ENCODE measurements at regions of chr1 and their contacts with region 1.

Region 1: DNA sequence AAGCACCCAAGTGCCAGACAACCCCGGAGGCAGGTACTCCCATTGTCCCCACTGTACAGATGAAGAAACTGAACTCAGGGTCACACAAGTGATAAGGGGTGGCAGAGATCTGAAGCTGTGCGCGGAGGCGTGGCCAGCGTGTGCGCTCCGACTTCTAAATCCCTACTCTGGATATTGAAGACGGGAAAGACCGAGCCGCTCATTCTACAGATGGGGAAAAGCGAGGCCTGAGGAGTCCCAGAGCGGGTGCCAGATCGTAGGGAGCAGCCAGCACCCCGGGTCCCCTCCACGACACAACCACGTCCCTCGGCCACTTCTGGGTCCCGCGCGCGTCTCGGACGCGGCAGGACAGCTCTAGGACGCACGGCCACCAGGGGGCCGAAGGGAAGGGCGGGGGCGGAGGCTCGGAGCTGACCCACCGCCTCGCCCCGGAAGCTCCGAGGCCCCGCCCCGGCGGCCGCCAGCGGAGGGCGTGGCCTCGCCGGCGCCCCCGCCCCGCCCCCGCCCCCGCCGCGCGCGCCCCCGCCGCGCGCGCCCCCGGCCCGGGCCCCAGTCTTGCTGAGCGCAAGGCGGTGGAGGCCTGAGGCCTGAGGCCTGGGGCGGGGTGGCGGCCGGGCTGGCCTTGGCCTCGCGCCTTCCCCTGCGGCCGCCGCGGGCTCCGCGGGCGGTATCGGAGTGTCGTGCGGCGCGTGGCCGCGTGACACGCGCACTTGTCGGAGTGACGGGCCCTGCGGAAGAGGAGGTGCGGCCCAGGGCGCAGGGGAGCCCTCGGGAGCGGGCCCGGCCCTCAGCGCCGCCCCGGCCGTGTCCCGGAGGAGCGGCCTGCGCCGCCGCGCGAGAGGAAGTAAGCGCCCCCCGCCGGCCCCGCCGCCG is at the start of gene H6PD:
- DNase-seq: no peak
- H3K4me3 ChIP-seq: peak within 1 kb of the TSS; percentile 62
- H3K27me3 ChIP-seq: no peaks in the 10 kb centered on the region
- CTCF ChIP-seq: peak; percentile 79
- polyA plus RNA-seq, gene H6PD: 12.0 and 16.6 TPM in 2 replicates

Region 2: DNA sequence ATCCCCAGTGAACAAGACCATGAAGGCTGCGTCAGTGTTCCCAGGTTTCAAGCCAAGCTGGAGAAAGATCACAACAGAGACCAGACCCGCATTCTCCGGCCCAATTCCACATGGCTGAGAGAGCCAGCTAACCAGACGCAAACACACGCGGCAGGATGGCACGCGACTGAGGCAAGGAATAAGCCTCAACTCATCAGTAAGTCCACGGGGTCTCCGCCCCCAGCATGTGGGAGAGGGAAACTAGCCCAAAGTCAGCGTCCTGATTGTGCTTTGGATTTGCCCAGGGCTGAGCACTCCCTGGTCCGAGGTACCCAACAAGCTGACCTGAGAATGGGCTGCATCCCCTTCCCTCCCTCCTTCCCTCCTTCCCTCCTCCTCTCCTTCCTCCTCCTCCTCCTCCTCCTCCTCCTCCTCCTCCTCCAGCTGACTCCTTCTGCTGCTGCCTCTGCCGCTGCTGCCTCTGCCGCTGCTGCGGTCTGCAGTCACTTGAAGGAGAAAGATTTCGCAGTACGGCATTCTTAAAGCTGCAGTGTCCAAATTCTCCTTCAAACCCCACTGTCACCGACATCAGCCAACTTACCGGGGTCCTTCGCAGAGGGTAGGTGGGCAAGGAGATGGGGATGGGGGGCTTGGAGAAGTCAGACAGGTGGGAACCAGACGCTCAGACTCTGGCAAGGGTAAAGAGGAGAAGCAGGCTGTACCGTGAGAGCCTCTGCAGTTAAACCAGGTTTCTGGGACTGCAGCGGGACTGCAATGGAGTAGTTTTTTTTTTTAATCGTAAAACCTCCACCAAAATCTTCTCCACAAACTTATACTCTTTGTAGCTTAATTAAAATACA is 32.8 kb before region 1 on chr1:
- CTCF ChIA-PET with region 1: interaction called, 15 read pairs
- POLR2A ChIA-PET with region 1: no interaction called
- DNase-seq: no peak
- H3K4me3 ChIP-seq: peak overlapping the region; percentile 55
- H3K27me3 ChIP-seq: peaks cover 6% of the 10 kb centered on the region
- CTCF ChIP-seq: no peak

Measured in BJ (cell line).